Activated B cell treated with CpG ODN at 0.5 μM for 24 hours (primary cell): ENCODE measurements at regions of chr4 and their contacts with region 1.

Region 1: DNA sequence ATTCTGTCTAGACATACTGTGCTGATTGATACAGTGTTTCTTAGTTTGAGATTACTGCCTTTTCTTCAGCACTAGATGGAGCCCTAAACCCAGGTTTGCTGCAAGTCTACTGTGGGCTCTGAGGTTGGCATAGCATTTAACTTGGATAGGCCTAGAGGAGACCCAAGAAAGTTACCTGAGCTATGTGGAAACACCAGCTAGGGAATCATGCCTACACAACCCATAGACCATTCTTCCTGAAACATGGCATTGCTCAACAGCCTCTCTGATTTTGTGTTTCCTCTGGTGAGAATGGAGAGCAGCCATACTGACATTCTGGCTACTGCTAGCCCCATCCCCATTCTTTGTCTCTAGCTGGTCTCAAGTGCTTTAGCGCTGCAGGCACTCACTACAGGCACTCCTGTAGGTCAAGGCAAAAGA is 287.7 kb upstream of the PCDH18 start:
- DNase-seq: no peak
- ATAC-seq: no peak
- H3K4me3 Mint-ChIP-seq: no peak overlapping the region
- H3K27ac Mint-ChIP-seq: no peak overlapping the region
- H3K4me1 Mint-ChIP-seq: no peaks in the 10 kb centered on the region
- H3K27me3 Mint-ChIP-seq: no peaks in the 10 kb centered on the region
- CTCF ChIP-seq: no peak

Region 2: GRCh38 chr4:138870737-138871554 is 1051.0 kb after region 1 on chr4:
- CTCF ChIA-PET with region 1: interaction called, 3 read pairs
- POLR2A ChIA-PET with region 1: no interaction called
- intact Hi-C with region 1: loop called (anchors 2 kb)
- DNase-seq: no peak
- ATAC-seq: no peak
- H3K4me3 Mint-ChIP-seq: no peak overlapping the region
- H3K27ac Mint-ChIP-seq: no peak overlapping the region
- H3K4me1 Mint-ChIP-seq: peaks cover 2% of the 10 kb centered on the region
- H3K27me3 Mint-ChIP-seq: peaks cover 20% of the 10 kb centered on the region
- CTCF ChIP-seq: peak; percentile 89